ENCODE measurements at regions of chr14 and their contacts with region 1.

Region 1: GRCh38 chr14:60266021-60266937 is 17.3 kb downstream of the PPM1A start:
- DNase-seq: peak; percentile 24
- ATAC-seq: peak; percentile 72
- H3K4me3 Mint-ChIP-seq: no peak overlapping the region
- H3K27ac Mint-ChIP-seq: no peak overlapping the region
- H3K4me1 Mint-ChIP-seq: peaks cover 37% of the 10 kb centered on the region
- H3K27me3 Mint-ChIP-seq: no peaks in the 10 kb centered on the region
- CTCF ChIP-seq: peak; percentile 42

Region 2: DNA sequence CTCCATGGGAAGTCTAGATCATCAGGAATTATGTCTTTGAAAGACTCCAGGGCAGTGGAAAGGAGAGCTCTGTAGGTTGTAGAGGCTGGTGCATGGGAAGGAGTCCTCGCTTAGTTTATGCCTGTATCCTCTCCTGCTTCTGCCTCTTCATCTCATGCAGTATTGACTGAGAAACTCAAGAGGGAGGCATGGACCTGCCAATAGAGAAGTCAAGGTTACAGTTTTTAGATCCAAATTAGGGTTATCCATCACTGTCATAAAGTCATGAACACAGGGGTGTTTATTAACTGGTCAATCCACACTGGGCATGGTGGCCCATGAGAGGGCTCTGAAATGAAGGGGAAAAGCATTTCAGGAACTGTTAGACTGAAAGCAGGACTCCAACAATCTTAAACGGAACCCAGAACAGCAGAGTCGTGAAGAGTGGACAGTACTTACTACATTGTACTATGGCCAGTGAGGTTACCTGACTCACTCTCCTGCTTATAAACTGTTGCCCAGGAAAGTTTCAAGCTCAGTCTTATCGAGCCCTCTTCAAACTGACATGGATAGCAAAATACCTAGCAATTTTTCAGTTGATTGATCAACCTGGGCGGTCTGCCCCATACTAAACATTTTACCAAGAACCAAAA is 71.0 kb before region 1 on chr14:
- CTCF ChIA-PET with region 1: interaction called, 13 read pairs
- POLR2A ChIA-PET with region 1: no interaction called
- DNase-seq: no peak
- ATAC-seq: peak; percentile 82
- H3K4me3 Mint-ChIP-seq: no peak overlapping the region
- H3K27ac Mint-ChIP-seq: no peak overlapping the region
- H3K4me1 Mint-ChIP-seq: peaks cover 25% of the 10 kb centered on the region
- H3K27me3 Mint-ChIP-seq: no peaks in the 10 kb centered on the region; the same call in 1 of the 2 replicates
- CTCF ChIP-seq: no peak

Region 3: GRCh38 chr14:60254176-60254575 is 12.1 kb before region 1 on chr14:
- CTCF ChIA-PET with region 1: interaction called, 36 read pairs
- POLR2A ChIA-PET with region 1: interaction called, 6 read pairs
- DNase-seq: no peak
- ATAC-seq: no peak
- H3K4me3 Mint-ChIP-seq: no peak overlapping the region
- H3K27ac Mint-ChIP-seq: peak overlapping the region; percentile 3; the same call in 1 of the 2 replicates
- H3K4me1 Mint-ChIP-seq: peaks cover 49% of the 10 kb centered on the region
- H3K27me3 Mint-ChIP-seq: no peaks in the 10 kb centered on the region
- CTCF ChIP-seq: no peak

Region 4: DNA sequence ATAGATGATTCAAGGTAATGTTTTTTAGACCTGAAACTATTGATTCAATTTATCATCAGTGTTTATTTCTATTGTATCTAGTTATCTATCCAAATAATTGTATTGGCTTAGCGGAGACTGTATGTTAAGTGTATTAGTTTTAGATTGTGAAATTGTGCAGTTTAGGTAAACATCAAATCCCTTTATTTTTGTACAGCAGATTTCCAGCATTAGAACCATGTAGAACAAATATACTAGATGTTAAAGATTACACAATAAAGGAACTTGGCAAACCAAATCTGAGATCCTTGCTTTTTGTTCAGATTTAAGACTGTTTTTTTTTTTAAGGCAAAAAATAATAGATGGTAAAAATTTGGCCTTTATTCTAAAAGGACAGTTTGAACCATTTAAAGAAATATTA is 22.0 kb after region 1 on chr14:
- CTCF ChIA-PET with region 1: interaction called, 14 read pairs
- POLR2A ChIA-PET with region 1: no interaction called
- DNase-seq: no peak
- ATAC-seq: no peak
- H3K4me3 Mint-ChIP-seq: no peak overlapping the region
- H3K27ac Mint-ChIP-seq: no peak overlapping the region
- H3K4me1 Mint-ChIP-seq: peaks cover 33% of the 10 kb centered on the region
- H3K27me3 Mint-ChIP-seq: no peaks in the 10 kb centered on the region
- CTCF ChIP-seq: no peak

Region 5: GRCh38 chr14:60304509-60304908 is 38.2 kb after region 1 on chr14:
- CTCF ChIA-PET with region 1: interaction called, 17 read pairs
- POLR2A ChIA-PET with region 1: no interaction called
- DNase-seq: no peak
- ATAC-seq: no peak
- H3K4me3 Mint-ChIP-seq: no peak overlapping the region
- H3K27ac Mint-ChIP-seq: no peak overlapping the region
- H3K4me1 Mint-ChIP-seq: peaks cover 51% of the 10 kb centered on the region
- H3K27me3 Mint-ChIP-seq: no peaks in the 10 kb centered on the region
- CTCF ChIP-seq: no peak

Region 6: DNA sequence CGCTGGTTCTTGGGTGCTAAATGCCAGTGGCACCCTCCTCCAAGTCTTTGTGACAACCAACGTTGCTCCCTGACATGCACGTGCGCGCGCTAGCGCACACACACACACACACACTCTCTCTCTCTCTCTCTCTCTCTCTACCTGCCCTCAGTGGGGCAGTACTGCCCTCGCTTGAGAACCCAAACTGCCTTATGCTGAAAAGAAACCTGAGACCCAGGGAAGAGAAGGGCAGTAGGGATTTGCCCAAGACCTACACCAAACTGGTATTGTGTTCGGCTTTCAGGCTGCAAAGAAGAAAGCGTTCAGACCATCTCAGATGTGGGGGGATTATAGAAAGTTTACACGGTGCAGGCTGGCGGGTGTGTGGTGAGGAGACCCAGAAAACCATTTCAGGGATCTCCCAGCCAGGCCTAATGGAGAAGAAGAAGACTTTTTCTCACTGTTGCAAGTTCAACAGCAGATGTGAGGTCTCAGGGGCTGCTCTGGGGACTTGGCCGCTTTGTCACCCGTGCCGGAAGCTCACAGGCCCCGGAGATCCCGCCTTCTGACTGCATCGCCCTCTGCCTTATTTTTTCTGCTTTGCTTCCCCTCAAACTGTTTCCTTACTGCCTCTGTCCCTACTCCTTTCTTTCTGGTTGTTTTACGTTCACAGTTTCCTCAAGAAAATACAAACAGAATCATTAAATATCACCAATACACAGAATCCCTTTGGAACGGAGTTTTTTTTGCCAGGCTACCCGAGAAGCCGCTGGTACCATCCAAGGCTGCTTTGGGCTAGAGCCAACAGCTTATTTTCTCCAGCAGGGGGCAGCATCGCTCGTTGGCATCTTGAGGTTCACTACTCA is 65.1 kb after region 1 on chr14:
- CTCF ChIA-PET with region 1: interaction called, 64 read pairs
- POLR2A ChIA-PET with region 1: interaction called, 4 read pairs
- DNase-seq: peak; percentile 90
- ATAC-seq: peak; percentile 74
- H3K4me3 Mint-ChIP-seq: peak overlapping the region; percentile 76
- H3K27ac Mint-ChIP-seq: peak overlapping the region; percentile 82
- H3K4me1 Mint-ChIP-seq: peaks cover 35% of the 10 kb centered on the region
- H3K27me3 Mint-ChIP-seq: no peaks in the 10 kb centered on the region; the same call in 1 of the 2 replicates
- CTCF ChIP-seq: peak; percentile 95

Measured in WTC11 (cell line).